ENCODE measurements at regions of chr19 and their contacts with region 1.

Region 1: GRCh38 chr19:55385740-55386529 is at the start of gene RPL28:
- DNase-seq: peak; percentile 98
- ATAC-seq: peak; percentile 93
- total RNA-seq, gene RPL28: 569 TPM

Region 2: GRCh38 chr19:55301459-55302317 is 84.2 kb before region 1 on chr19:
- intact Hi-C with region 1: loop called (anchors 5 kb)
- DNase-seq: peak; percentile 93
- ATAC-seq: peak; percentile 89

Region 3: DNA sequence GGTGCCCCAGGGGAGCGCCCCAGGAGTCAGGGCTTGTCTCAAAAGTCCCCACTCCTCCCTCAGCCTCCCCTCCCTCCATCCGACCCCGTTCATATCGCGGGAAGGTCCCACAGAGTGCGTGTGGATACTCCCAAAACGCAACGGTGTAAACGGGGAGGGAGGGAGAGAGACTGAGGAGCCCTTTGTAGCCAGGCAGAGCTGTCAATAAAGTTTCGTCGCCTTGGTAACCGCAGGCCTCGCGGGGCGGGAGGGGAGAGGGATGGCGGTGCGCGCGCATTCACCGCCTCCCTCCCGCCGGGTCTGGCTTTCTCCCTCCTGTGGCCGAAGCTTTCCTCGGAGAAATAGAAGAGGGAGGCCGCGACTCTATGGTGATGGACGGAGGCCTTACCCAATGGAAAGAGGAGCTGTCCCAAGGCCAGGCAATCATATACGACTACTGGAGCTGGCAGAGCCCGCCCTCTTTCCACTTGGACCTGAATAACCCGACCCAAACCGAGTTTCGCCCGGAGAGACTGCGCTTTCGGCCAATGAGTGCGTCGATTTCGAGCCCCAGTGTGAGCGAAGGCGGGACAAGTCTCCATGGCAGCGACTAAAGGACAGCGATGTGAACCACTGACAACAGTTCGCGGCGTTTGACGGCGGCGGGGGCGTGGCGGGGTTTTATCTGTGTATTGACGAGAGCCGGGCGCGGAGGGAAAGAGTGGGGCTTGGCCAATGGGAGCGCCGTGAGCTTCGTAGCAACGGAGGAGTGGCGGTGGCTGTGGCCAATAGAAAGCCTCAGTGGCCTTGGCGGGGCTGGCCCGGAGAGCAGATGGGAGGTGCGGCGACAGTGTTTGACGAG is 46.7 kb before region 1 on chr19 and contains the start of gene KMT5C:
- intact Hi-C with region 1: loop called (anchors 2 kb)
- DNase-seq: peak; percentile 100
- ATAC-seq: peak; percentile 93
- total RNA-seq, gene KMT5C: 6.6 TPM